H1 (cell line): ENCODE measurements at regions of chr10 and their contacts with region 1.

Region 1: GRCh38 chr10:97463363-97464132 is 17.6 kb downstream of the ZDHHC16 start:
- DNase-seq: peak in 1 of 2 experiments; percentile 77
- H3K4me3 ChIP-seq: no peak overlapping the region
- H3K27ac ChIP-seq: no peak overlapping the region
- H3K4me1 ChIP-seq: no peaks in the 10 kb centered on the region
- H3K27me3 ChIP-seq: no peaks in the 10 kb centered on the region
- CTCF ChIP-seq: peak; percentile 63 to 96 (median 95)
- EP300 ChIP-seq: no peak
- POLR2A ChIP-seq: peak in 1 of 2 experiments; percentile 34; a peak in 1 of 3 replicates
- RAD21 ChIP-seq: peak; percentile 87 to 91

Region 2: GRCh38 chr10:97365761-97366351 is 97.7 kb before region 1 on chr10:
- CTCF ChIA-PET with region 1: no interaction called
- POLR2A ChIA-PET with region 1: no interaction called
- DNase-seq: no peak
- H3K4me3 ChIP-seq: no peak overlapping the region
- H3K27ac ChIP-seq: no peak overlapping the region
- H3K4me1 ChIP-seq: no peaks in the 10 kb centered on the region; a peak in 1 of 7 replicates
- H3K27me3 ChIP-seq: no peaks in the 10 kb centered on the region
- CTCF ChIP-seq: no peak
- EP300 ChIP-seq: no peak
- POLR2A ChIP-seq: no peak
- RAD21 ChIP-seq: no peak

Region 3: DNA sequence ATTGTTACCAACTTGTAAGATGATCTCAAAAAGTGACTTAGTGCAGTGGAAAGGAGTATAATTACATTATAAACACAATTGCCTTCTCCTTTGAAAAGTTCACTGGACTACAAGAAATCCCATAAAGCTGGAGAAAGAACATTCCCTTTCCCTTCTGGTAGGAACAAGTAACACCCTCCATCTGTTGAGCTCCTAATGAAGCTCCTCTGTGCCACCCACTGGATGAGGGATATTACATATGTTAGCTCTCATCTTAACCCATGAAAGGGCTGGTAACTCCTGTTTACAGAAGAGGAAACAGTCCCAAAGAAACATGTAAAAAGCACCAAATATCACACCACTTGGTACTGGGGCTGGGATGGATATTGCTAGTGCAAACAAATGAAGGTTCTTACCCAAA is 29.5 kb before region 1 on chr10:
- CTCF ChIA-PET with region 1: interaction called, 5 read pairs
- POLR2A ChIA-PET with region 1: interaction called, 12 read pairs
- DNase-seq: no peak
- H3K4me3 ChIP-seq: no peak overlapping the region
- H3K27ac ChIP-seq: no peak overlapping the region
- H3K4me1 ChIP-seq: no peaks in the 10 kb centered on the region
- H3K27me3 ChIP-seq: no peaks in the 10 kb centered on the region
- CTCF ChIP-seq: no peak
- EP300 ChIP-seq: no peak
- POLR2A ChIP-seq: no peak
- RAD21 ChIP-seq: no peak

Region 4: DNA sequence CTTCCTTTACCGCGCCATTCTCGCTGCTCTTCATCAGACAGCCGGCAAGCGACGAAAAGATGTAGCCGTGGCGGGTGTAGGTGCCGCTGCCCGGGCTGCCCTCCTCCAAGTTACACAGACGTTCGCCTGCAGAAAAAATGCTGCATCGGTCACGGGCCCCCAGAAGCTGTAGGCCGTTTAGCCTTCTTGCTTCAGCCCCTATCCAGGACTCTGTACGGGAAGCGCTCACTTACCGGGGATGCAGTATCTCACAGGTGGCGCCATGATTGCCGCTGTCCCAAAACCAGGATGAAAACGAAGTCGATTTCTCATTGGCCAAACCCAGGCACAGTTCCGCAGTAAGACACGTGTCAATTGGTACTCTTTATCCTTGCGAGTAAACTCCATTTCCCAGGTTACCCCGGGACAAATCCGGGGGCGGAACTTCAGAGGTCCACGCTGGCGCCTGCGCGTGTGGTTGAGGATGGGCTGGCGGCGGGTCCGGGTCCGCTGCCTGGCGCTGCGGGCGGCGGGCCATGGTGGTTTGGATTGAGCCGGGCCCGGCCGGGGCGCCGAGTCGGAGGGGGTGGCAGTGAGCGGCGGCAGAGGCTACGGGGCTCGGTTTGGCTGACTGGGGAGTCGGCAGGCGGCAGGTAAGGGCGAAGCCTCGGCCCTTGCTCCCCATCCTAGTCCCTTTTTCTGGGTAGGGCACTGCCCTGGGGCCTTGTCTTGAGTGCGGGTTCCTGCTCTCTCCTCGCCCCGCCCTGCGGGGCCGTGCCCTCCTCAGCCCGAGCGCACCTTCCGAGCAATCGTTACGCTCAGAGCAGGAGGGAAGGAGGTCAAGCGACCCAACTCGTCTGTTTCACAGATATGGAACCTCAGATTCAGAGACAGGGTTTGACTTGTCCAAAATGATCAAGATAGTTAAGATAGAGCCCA is 17.6 kb before region 1 on chr10 and contains the starts of genes EXOSC1 and ZDHHC16:
- CTCF ChIA-PET with region 1: interaction called, 40 read pairs
- POLR2A ChIA-PET with region 1: interaction called, 105 read pairs
- DNase-seq: peak; percentile 86 to 94
- H3K4me3 ChIP-seq: peak within 1 kb of the TSS; percentile 78 to 98 (median 87)
- H3K27ac ChIP-seq: peak within 1 kb of the TSS; percentile 78
- H3K4me1 ChIP-seq: peaks cover 0 to 8% (median under 1%) of the 10 kb centered on the region in 4 experiments; a peak in 5 of 7 replicates
- H3K27me3 ChIP-seq: no peaks in the 10 kb centered on the region
- CTCF ChIP-seq: peak in 1 of 3 experiments; percentile 1; a peak in 1 of 4 replicates
- EP300 ChIP-seq: no peak
- POLR2A ChIP-seq: peak; percentile 63 to 86
- RAD21 ChIP-seq: no peak; a peak in 1 of 4 replicates
- total RNA-seq, gene EXOSC1: 52.1 and 53.6 TPM in 2 replicates
- total RNA-seq, gene ZDHHC16: 45.9 and 50.4 TPM in 2 replicates

Region 5: GRCh38 chr10:97475936-97476594 is 12.5 kb after region 1 on chr10:
- CTCF ChIA-PET with region 1: interaction called, 46 read pairs
- POLR2A ChIA-PET with region 1: interaction called, 105 read pairs
- DNase-seq: no peak
- H3K4me3 ChIP-seq: no peak overlapping the region
- H3K27ac ChIP-seq: no peak overlapping the region
- H3K4me1 ChIP-seq: peaks cover 8 to 13% (median 10%) of the 10 kb centered on the region in 4 experiments; a peak in 6 of 7 replicates
- H3K27me3 ChIP-seq: no peaks in the 10 kb centered on the region
- CTCF ChIP-seq: no peak
- EP300 ChIP-seq: no peak
- POLR2A ChIP-seq: no peak
- RAD21 ChIP-seq: no peak

Region 6: GRCh38 chr10:97534746-97535367 is 71.3 kb after region 1 on chr10:
- CTCF ChIA-PET with region 1: interaction called, 57 read pairs
- POLR2A ChIA-PET with region 1: interaction called, 4 read pairs
- DNase-seq: peak in 1 of 2 experiments; percentile 79
- H3K4me3 ChIP-seq: no peak overlapping the region
- H3K27ac ChIP-seq: no peak overlapping the region
- H3K4me1 ChIP-seq: peaks cover 0 to 15% (median 8%) of the 10 kb centered on the region in 4 experiments; a peak in 6 of 7 replicates
- H3K27me3 ChIP-seq: no peaks in the 10 kb centered on the region
- CTCF ChIP-seq: peak; percentile 78 to 85 (median 84)
- EP300 ChIP-seq: no peak
- POLR2A ChIP-seq: no peak
- RAD21 ChIP-seq: peak; percentile 67 to 76

Region 7: GRCh38 chr10:97553575-97554031 is 90.1 kb after region 1 on chr10:
- CTCF ChIA-PET with region 1: interaction called, 65 read pairs
- POLR2A ChIA-PET with region 1: interaction called, 5 read pairs
- DNase-seq: peak in 1 of 2 experiments; percentile 81
- H3K4me3 ChIP-seq: peak overlapping the region in 3 of 4 experiments; percentile 30 to 32 (median 31); a peak in 6 of 8 replicates
- H3K27ac ChIP-seq: no peak overlapping the region; the same call in 1 of the 2 replicates
- H3K4me1 ChIP-seq: peaks cover 15 to 29% (median 22%) of the 10 kb centered on the region in 4 experiments
- H3K27me3 ChIP-seq: no peaks in the 10 kb centered on the region
- CTCF ChIP-seq: peak; percentile 89 to 95 (median 95)
- EP300 ChIP-seq: no peak
- POLR2A ChIP-seq: no peak
- RAD21 ChIP-seq: peak; percentile 84 to 88